Mucosa of descending colon (tissue), 3 donors: ENCODE measurements at regions of chr2 and their contacts with region 1.

Region 1: GRCh38 chr2:100984892-100985379 is 17.2 kb upstream of the RPL31 start:
- DNase-seq: peak; percentile 76 to 82 (median 79)
- ATAC-seq: peak; percentile 78
- H3K4me3 ChIP-seq: no peak overlapping the region
- H3K4me1 ChIP-seq: no peaks in the 10 kb centered on the region
- CTCF ChIP-seq: peak; percentile 84

Region 2: DNA sequence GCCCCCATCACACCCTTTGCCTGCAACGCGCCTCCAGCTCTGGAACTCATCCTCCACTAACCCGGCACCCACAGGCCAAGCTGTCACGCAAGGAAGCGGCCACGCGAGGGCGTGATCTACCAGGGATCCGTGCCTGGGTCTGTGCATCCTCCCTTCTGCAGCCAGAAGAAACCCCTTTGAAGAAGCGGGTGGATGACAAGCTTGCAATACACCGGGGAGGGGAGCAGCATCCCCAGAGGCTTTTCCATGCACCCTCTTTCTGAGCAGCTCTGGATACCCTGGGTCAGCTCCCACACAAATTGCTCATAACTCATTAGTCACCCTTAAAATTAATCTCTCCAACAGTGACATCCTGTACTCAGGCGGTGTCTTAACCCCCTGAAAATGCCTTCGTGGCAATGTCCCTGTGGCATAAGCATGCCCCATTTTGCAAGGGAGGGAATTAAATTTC is 374.5 kb before region 1 on chr2:
- intact Hi-C with region 1: loop called (anchors 5 kb)
- DNase-seq: peak; percentile 56 to 71 (median 69)
- ATAC-seq: peak; percentile 73
- H3K4me3 ChIP-seq: no peak overlapping the region
- H3K4me1 ChIP-seq: no peaks in the 10 kb centered on the region
- CTCF ChIP-seq: no peak

Region 3: GRCh38 chr2:100730346-100730745 is 254.6 kb before region 1 on chr2:
- intact Hi-C with region 1: loop called in 1 of 2 experiments (anchors 2 kb)
- DNase-seq: peak in 2 of 3 donors; percentile 76 to 81
- ATAC-seq: peak; percentile 84
- H3K4me3 ChIP-seq: no peak overlapping the region
- H3K4me1 ChIP-seq: no peaks in the 10 kb centered on the region
- CTCF ChIP-seq: no peak

Region 4: DNA sequence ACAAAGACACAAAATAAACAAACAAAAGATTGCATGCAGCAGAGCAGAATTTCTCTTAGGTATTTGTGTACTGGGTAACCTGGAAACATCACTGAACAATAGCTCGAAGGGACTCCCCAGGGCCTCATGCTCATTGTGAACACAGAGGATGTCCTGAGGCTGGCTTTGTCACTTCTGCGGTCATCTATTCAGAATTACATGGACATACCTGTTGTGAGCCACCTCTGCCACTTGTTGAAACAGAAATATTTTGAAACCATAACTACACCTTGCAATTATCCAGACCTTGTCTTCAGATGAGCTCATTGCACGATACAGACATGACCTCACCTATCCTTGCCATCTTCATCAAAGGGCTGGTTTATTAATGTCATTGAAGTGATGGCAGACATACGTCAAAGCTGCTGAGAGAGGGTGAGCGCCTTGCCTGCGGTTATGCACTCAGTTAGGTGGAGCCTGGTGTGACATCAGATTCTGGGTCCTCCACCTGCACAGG is 425.8 kb after region 1 on chr2:
- intact Hi-C with region 1: no loop called
- DNase-seq: no peak
- ATAC-seq: no peak
- H3K4me3 ChIP-seq: no peak overlapping the region
- H3K4me1 ChIP-seq: no peaks in the 10 kb centered on the region
- CTCF ChIP-seq: no peak